ENCODE measurements at regions of chr15 and their contacts with region 1.

Region 1: GRCh38 chr15:65020419-65020818 is 9.0 kb downstream of the MTFMT start:
- DNase-seq: no peak
- H3K4me3 ChIP-seq: no peak overlapping the region
- H3K27ac ChIP-seq: no peak overlapping the region
- H3K4me1 ChIP-seq: no peaks in the 10 kb centered on the region
- H3K27me3 ChIP-seq: no peaks in the 10 kb centered on the region
- CTCF ChIP-seq: no peak

Region 2: GRCh38 chr15:65451989-65452388 is 431.6 kb after region 1 on chr15:
- CTCF ChIA-PET with region 1: no interaction called
- POLR2A ChIA-PET with region 1: interaction called, 13 read pairs
- intact Hi-C with region 1: no loop called
- DNase-seq: no peak
- H3K4me3 ChIP-seq: no peak overlapping the region
- H3K27ac ChIP-seq: no peak overlapping the region
- H3K4me1 ChIP-seq: no peaks in the 10 kb centered on the region
- H3K27me3 ChIP-seq: no peaks in the 10 kb centered on the region
- CTCF ChIP-seq: no peak

Measured in A673 (cell line).